Activated B cell treated with CpG ODN at 0.5 μM for 24 hours (primary cell): ENCODE measurements at regions of chr19 and their contacts with region 1.

Region 1: DNA sequence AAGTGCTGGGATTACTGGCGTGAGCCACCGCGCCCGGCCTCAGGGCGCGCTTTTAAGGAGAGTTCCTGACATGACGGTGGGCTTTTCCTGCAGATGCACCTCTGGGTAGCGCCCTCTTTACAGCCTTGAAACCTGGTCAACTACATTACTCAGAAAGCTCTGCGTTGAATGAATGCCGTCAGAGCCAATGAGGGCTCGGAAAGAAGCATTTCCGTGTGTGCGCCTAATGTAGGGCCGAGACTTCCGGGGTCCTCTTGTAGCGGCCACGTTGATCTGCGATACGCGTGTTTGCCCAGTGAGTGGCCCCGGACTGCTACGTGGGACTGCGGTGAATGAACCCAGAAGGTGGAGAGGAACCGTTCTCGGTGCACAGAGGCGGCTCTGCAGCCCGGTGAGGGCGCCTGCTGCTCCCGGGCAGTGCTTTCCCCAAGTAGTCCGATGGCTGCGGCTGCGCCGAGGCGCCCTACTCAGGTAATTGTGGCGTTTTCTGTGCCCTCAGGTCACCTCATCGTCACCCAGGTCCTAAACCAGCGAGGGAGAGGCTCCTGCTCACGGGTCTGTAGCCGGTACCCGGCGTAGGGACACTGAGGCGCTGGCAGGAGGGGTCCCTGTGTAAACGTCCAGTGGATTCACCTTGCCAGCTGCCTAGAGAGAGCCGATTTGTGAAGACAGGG is 4.9 kb upstream of the ZNF552 start:
- DNase-seq: peak; percentile 60
- ATAC-seq: peak; percentile 84
- H3K4me3 Mint-ChIP-seq: peak overlapping the region; percentile 98
- H3K27ac Mint-ChIP-seq: peak overlapping the region; percentile 97
- H3K4me1 Mint-ChIP-seq: peaks cover 55% of the 10 kb centered on the region
- H3K27me3 Mint-ChIP-seq: no peaks in the 10 kb centered on the region
- CTCF ChIP-seq: no peak

Region 2: GRCh38 chr19:57240311-57241090 is 579.1 kb before region 1 on chr19 and contains the start of gene ZNF805:
- CTCF ChIA-PET with region 1: no interaction called
- POLR2A ChIA-PET with region 1: no interaction called
- intact Hi-C with region 1: loop called (anchors 5 kb)
- DNase-seq: peak; percentile 90
- ATAC-seq: peak; percentile 93
- H3K4me3 Mint-ChIP-seq: peak within 1 kb of the TSS; percentile 95
- H3K27ac Mint-ChIP-seq: peak within 1 kb of the TSS; percentile 93
- H3K4me1 Mint-ChIP-seq: peaks cover 39% of the 10 kb centered on the region
- H3K27me3 Mint-ChIP-seq: no peaks in the 10 kb centered on the region
- CTCF ChIP-seq: no peak
- total RNA-seq, gene ZNF805: 20.3 and 25.9 TPM in 2 replicates

Region 3: GRCh38 chr19:57746580-57747471 is 72.8 kb before region 1 on chr19 and contains the start of gene ZNF776:
- CTCF ChIA-PET with region 1: no interaction called
- POLR2A ChIA-PET with region 1: interaction called, 13 read pairs
- intact Hi-C with region 1: loop called (anchors 2 kb)
- DNase-seq: peak; percentile 54
- ATAC-seq: peak; percentile 95
- H3K4me3 Mint-ChIP-seq: peak within 1 kb of the TSS; percentile 91
- H3K27ac Mint-ChIP-seq: peak within 1 kb of the TSS; percentile 87
- H3K4me1 Mint-ChIP-seq: peaks cover 42% of the 10 kb centered on the region
- H3K27me3 Mint-ChIP-seq: no peaks in the 10 kb centered on the region
- CTCF ChIP-seq: no peak
- total RNA-seq, gene ZNF776: 26.5 and 29.9 TPM in 2 replicates

Region 4: GRCh38 chr19:57802269-57802668 is 17.3 kb before region 1 on chr19:
- CTCF ChIA-PET with region 1: no interaction called
- POLR2A ChIA-PET with region 1: interaction called, 6 read pairs
- intact Hi-C with region 1: loop called (anchors 1 kb)
- DNase-seq: no peak
- ATAC-seq: peak; percentile 86
- H3K4me3 Mint-ChIP-seq: peak overlapping the region; percentile 52
- H3K27ac Mint-ChIP-seq: peak overlapping the region; percentile 89
- H3K4me1 Mint-ChIP-seq: peaks cover 44% of the 10 kb centered on the region
- H3K27me3 Mint-ChIP-seq: no peaks in the 10 kb centered on the region
- CTCF ChIP-seq: no peak

Region 5: DNA sequence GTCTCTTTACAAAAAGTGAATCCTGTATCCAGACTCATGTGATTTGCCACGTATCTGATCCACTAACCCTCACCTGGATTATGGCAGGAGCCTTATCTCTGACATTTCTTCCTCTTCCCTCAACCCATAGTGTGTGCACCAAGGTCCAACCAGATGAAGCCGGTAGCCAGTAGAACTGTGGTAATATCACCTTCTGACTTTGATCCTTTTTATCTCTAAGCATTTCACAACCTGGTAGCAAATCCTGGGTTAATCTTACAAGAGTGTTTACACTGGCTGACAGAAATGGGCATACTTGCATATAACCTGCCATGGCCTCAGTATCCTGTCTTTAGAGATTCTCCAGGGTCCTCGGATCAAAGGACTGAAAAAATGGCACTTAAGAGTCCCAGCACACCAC is 94.9 kb after region 1 on chr19:
- CTCF ChIA-PET with region 1: no interaction called
- POLR2A ChIA-PET with region 1: interaction called, 12 read pairs
- intact Hi-C with region 1: loop called (anchors 1 kb)
- DNase-seq: no peak
- ATAC-seq: no peak
- H3K4me3 Mint-ChIP-seq: peak overlapping the region; percentile 94
- H3K27ac Mint-ChIP-seq: no peak overlapping the region
- H3K4me1 Mint-ChIP-seq: peaks cover 34% of the 10 kb centered on the region
- H3K27me3 Mint-ChIP-seq: no peaks in the 10 kb centered on the region
- CTCF ChIP-seq: no peak